Naive thymus-derived CD8-positive, alpha-beta T cell (primary cell): ENCODE measurements at regions of chr13 and their contacts with region 1.

Region 1: GRCh38 chr13:48126944-48127830 is 32.3 kb upstream of the MED4 start:
- DNase-seq: peak in 9 of 10 donors; percentile 10 to 82 (median 47)
- ATAC-seq: peak; percentile 85 to 91
- H3K4me3 Mint-ChIP-seq: peak overlapping the region; percentile 34 to 78 (median 62)
- H3K27ac Mint-ChIP-seq: peak overlapping the region; percentile 88 to 97 (median 94)
- H3K4me1 Mint-ChIP-seq: peaks cover 14 to 31% (median 25%) of the 10 kb centered on the region in 4 donors
- H3K27me3 Mint-ChIP-seq: no peaks in the 10 kb centered on the region

Region 2: GRCh38 chr13:48155848-48156247 is 28.7 kb after region 1 on chr13:
- POLR2A ChIA-PET with region 1: interaction called, 14 read pairs
- DNase-seq: peak in 9 of 10 donors; percentile 17 to 79 (median 56)
- ATAC-seq: peak; percentile 75 to 87
- H3K4me3 Mint-ChIP-seq: peak overlapping the region; percentile 57 to 89 (median 78)
- H3K27ac Mint-ChIP-seq: peak overlapping the region; percentile 93 to 99 (median 97)
- H3K4me1 Mint-ChIP-seq: peaks cover 46 to 95% (median 86%) of the 10 kb centered on the region in 4 donors
- H3K27me3 Mint-ChIP-seq: no peaks in the 10 kb centered on the region

Region 3: DNA sequence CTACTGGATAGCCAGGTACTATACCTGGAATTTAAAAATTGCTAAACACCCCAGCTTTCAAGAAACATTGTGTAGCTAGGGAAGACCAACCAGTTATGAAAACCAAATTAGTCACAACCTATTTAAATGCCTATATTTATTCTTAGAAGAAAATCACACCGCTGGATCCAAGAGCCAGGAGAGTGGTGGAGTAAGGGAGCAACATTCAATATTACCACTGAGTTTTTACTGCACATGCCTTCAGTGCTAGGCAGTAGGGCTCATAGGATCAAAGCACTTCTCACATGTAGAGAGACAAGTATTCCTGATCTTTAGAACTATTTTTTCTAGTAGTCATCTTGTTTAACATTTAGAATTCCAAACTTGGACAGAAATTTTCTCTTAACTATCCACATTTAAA is 117.0 kb after region 1 on chr13:
- POLR2A ChIA-PET with region 1: no interaction called
- DNase-seq: no peak
- ATAC-seq: no peak
- H3K4me3 Mint-ChIP-seq: peak overlapping the region in 8 of 10 donors; percentile 21 to 57 (median 42)
- H3K27ac Mint-ChIP-seq: peak overlapping the region in 7 of 10 donors; percentile 31 to 66 (median 47)
- H3K4me1 Mint-ChIP-seq: peaks cover 26 to 86% (median 65%) of the 10 kb centered on the region in 4 donors
- H3K27me3 Mint-ChIP-seq: no peaks in the 10 kb centered on the region

Region 4: DNA sequence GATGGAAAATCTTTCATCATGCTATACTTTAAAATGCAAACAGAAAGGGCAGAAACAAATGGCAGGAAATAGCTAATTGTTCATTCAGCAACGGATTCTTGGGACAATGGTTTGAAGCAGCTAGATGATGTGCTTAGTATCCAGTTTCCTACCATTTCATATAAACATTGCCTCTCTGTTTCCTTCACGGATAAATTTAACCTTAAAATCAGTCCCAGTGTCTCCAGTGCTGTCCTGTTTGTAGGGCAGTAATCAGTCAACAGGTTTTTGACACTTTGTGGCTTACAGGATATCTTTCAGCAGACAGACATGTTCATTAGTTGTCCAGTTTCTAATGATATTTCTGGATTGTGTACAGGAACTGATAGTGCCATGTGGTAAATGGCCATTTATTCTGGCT is 151.6 kb after region 1 on chr13:
- POLR2A ChIA-PET with region 1: no interaction called
- DNase-seq: no peak
- ATAC-seq: no peak
- H3K4me3 Mint-ChIP-seq: no peak overlapping the region
- H3K27ac Mint-ChIP-seq: no peak overlapping the region
- H3K4me1 Mint-ChIP-seq: peaks cover 0 to 3% (median 0%) of the 10 kb centered on the region in 4 donors
- H3K27me3 Mint-ChIP-seq: no peaks in the 10 kb centered on the region